Motor neuron (in vitro differentiated cells): ENCODE measurements at regions of chr18 and their contacts with region 1.

Region 1: GRCh38 chr18:7272311-7273049 is 41.6 kb downstream of the LRRC30 start:
- ATAC-seq: peak; percentile 67 to 92 (median 72)
- H3K4me3 ChIP-seq: no peak overlapping the region
- H3K27ac ChIP-seq: no peak overlapping the region
- H3K4me1 ChIP-seq: peaks cover 0 to 4% of the 10 kb centered on the region in 2 donors

Region 2: GRCh38 chr18:7541835-7542234 is 269.4 kb after region 1 on chr18:
- in situ Hi-C with region 1: no loop called
- ATAC-seq: no peak
- H3K4me3 ChIP-seq: no peak overlapping the region
- H3K27ac ChIP-seq: no peak overlapping the region
- H3K4me1 ChIP-seq: no peaks in the 10 kb centered on the region

Region 3: DNA sequence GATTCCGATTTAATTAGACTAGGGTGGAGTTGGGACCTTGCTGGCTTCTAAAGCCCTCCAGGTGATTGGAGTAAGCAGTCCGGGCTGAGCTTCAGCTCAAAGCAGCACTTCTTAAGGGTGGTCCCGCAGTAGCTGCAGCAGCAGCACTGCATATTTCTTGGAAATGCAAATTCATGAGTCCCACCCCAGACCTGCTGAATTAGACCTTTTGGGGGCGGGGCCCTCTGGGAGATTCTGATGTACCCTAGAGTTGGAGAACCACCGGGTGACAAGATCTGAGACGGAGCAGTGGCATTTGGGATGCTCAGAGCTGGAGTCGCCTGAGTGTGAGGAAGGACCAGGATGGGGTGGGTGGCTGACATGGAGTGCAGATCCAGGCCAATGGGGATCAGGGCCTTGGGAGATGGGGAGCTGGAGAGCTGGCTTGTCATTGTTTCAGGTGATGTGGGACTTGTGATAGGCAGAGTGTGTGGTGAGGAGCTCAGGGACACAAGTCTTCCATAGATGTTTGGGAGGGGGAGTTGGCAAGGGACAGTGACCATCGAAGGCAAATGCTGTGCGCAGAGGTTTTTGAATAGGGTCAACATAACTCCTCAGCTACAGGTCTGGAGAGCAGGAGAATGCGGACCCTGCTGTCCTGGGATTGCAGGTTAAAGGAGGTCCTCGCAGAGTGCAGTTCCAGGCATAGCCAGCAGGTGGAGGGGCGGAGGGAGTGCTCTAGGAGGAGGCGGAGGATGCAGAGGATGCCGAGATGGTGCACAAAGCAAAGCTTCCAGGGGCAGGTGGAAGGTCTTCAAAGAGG is 1205.9 kb after region 1 on chr18:
- in situ Hi-C with region 1: loop called in 1 of 9 experiments (anchors 25 kb)
- ATAC-seq: peak in 4 of 8 experiments; percentile 52 to 89 (median 62)
- H3K4me3 ChIP-seq: no peak overlapping the region
- H3K27ac ChIP-seq: no peak overlapping the region
- H3K4me1 ChIP-seq: no peaks in the 10 kb centered on the region